MCF 10A (cell line): ENCODE measurements at regions of chr2 and their contacts with region 1.

Region 1: DNA sequence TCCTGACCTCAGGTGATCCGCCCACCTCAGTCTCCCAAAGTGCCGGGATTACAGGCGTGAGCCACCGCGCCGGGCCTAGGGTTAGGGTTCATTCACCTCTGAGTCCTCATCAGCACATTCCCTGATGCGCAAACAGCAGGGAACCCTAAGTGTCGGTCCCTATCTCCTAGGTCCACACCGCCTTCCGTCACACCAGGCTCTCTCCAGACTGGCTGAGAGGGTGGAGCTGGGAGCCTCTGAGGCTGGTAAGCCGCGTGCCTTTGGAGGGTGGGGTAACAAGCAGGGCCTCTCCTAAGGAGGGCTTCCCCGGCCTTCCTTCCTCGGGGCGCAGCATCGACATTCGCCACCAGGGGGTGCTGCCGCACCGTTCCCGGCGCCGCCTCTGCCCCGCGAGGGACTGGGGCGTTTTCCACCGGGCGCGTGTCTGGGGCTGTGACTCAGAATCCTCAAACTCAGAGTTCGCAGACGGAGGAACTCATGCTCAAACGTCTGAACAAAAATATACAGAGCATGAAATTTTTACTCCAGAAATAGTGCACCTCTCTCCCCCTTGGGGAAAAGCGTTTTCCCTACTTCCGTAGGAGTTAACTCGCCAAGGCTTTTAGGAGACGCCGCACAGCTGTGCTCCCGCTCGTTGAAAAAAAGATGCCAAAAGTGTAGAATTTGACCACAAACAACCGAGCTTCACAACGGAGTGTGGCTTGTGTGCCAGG is 63.9 kb upstream of the ASAP2 start:
- DNase-seq: peak; percentile 84
- H3K4me3 Mint-ChIP-seq: peak overlapping the region; percentile 44
- H3K27ac Mint-ChIP-seq: peak overlapping the region; percentile 23
- H3K4me1 Mint-ChIP-seq: peaks cover 20% of the 10 kb centered on the region
- H3K27me3 Mint-ChIP-seq: no peaks in the 10 kb centered on the region
- CTCF ChIP-seq: peak; percentile 96

Region 2: GRCh38 chr2:7905756-7906155 is 1237.0 kb before region 1 on chr2:
- CTCF ChIA-PET with region 1: no interaction called
- POLR2A ChIA-PET with region 1: no interaction called
- intact Hi-C with region 1: no loop called
- DNase-seq: no peak
- H3K4me3 Mint-ChIP-seq: no peak overlapping the region
- H3K27ac Mint-ChIP-seq: no peak overlapping the region
- H3K4me1 Mint-ChIP-seq: no peaks in the 10 kb centered on the region
- H3K27me3 Mint-ChIP-seq: no peaks in the 10 kb centered on the region
- CTCF ChIP-seq: no peak

Region 3: GRCh38 chr2:8424997-8425900 is 717.5 kb before region 1 on chr2:
- CTCF ChIA-PET with region 1: no interaction called
- POLR2A ChIA-PET with region 1: no interaction called
- intact Hi-C with region 1: no loop called
- DNase-seq: no peak
- H3K4me3 Mint-ChIP-seq: no peak overlapping the region
- H3K27ac Mint-ChIP-seq: no peak overlapping the region
- H3K4me1 Mint-ChIP-seq: no peaks in the 10 kb centered on the region
- H3K27me3 Mint-ChIP-seq: no peaks in the 10 kb centered on the region
- CTCF ChIP-seq: no peak

Region 4: GRCh38 chr2:8872821-8873432 is 269.8 kb before region 1 on chr2:
- CTCF ChIA-PET with region 1: interaction called, 137 read pairs
- POLR2A ChIA-PET with region 1: interaction called, 7 read pairs
- intact Hi-C with region 1: loop called (anchors 1 kb)
- DNase-seq: peak; percentile 61
- H3K4me3 Mint-ChIP-seq: no peak overlapping the region
- H3K27ac Mint-ChIP-seq: no peak overlapping the region
- H3K4me1 Mint-ChIP-seq: no peaks in the 10 kb centered on the region
- H3K27me3 Mint-ChIP-seq: no peaks in the 10 kb centered on the region
- CTCF ChIP-seq: peak; percentile 51

Region 5: GRCh38 chr2:9003616-9004337 is 138.9 kb before region 1 on chr2 and contains the start of gene MBOAT2:
- CTCF ChIA-PET with region 1: no interaction called
- POLR2A ChIA-PET with region 1: interaction called, 4 read pairs
- intact Hi-C with region 1: loop called (anchors 1 kb)
- DNase-seq: peak; percentile 84
- H3K4me3 Mint-ChIP-seq: peak within 1 kb of the TSS; percentile 83
- H3K27ac Mint-ChIP-seq: peak within 1 kb of the TSS; percentile 78
- H3K4me1 Mint-ChIP-seq: peaks cover 35% of the 10 kb centered on the region
- H3K27me3 Mint-ChIP-seq: no peaks in the 10 kb centered on the region
- CTCF ChIP-seq: no peak
- total RNA-seq, gene MBOAT2: 30.1 and 34.7 TPM in 2 replicates

Region 6: GRCh38 chr2:9287400-9288043 is 144.8 kb after region 1 on chr2:
- CTCF ChIA-PET with region 1: interaction called, 4 read pairs
- POLR2A ChIA-PET with region 1: interaction called, 5 read pairs
- intact Hi-C with region 1: loop called (anchors 2 kb)
- DNase-seq: peak; percentile 97
- H3K4me3 Mint-ChIP-seq: peak overlapping the region; percentile 50
- H3K27ac Mint-ChIP-seq: peak overlapping the region; percentile 84
- H3K4me1 Mint-ChIP-seq: peaks cover 58% of the 10 kb centered on the region
- H3K27me3 Mint-ChIP-seq: no peaks in the 10 kb centered on the region
- CTCF ChIP-seq: no peak

Region 7: DNA sequence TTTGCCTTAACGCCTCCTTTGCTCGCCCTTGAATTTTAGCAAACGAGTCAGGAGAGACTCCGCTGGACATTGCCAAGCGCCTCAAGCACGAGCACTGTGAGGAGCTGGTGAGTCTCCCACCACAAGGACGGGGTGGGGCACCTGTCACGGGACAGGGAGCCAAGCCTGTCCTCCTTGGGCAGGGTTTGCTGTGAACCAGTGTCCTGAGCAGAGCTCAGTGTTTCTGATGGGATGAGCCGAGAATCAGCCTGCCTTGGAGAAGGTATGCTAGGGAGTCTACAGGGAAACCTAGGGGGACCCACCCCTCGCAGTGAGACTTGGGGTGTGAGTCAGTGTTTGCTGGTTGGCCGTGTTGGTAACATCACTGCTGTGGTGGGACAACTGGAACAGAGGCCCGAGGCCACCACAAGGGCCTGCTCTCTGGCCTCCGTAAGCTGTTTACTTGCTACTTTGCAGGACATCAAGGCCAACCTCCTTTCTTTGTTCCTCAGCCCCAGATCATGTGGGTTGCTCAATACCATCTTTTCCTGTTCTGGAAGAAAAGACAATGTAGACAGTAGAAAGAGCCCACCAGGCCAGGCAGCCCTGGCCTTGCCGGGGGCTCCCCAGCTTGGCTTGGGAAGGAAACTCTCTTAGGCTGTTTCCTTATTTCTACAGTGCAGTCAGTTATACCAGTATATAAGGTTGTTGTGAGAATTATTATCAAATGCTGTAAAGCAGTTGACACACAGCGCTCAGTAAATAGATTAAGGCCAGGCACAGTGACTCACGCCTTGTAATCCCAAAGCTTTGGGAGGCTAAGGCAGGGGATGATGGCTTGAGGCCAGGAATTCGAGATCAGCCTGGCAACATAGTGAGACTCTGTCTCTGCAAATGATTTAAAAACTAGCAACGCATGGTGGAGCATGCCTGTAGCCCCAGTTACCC is 238.3 kb after region 1 on chr2:
- CTCF ChIA-PET with region 1: interaction called, 3 read pairs
- POLR2A ChIA-PET with region 1: interaction called, 4 read pairs
- intact Hi-C with region 1: loop called (anchors 2 kb)
- DNase-seq: peak; percentile 94
- H3K4me3 Mint-ChIP-seq: peak overlapping the region; percentile 11
- H3K27ac Mint-ChIP-seq: peak overlapping the region; percentile 84
- H3K4me1 Mint-ChIP-seq: peaks cover 16% of the 10 kb centered on the region
- H3K27me3 Mint-ChIP-seq: no peaks in the 10 kb centered on the region
- CTCF ChIP-seq: no peak

Region 8: DNA sequence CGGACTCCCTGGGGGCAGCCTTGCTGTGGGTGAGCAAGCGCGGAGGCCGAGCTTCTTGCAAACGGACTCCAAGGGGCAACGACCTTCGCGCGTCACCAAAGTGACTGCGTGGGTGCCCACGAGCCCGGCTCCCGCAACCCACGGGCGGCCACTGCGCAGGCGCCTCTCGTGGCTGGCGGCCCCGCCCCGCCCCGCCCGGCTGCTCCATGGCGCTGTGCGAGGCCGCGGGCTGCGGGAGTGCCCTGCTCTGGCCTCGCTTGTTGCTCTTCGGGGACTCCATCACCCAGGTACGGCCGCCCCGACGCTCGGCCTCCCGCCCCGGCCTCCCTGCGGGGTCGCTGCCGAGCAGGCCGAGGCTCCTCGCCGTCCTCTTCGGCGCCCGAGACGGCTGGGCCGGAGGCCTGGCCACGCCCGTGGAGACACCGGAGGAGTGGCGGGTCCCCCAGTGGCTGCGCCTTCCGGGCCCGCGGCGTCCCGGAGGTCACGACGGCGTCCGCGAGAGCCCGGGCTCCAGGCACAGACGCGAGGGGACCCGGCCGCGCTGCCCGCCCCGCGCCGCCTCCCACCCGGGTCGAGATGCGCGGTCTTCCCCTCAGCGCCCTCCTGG is 331.8 kb after region 1 on chr2 and contains the start of gene IAH1:
- CTCF ChIA-PET with region 1: interaction called, 3 read pairs
- POLR2A ChIA-PET with region 1: interaction called, 3 read pairs
- intact Hi-C with region 1: loop called (anchors 2 kb)
- DNase-seq: peak; percentile 48
- H3K4me3 Mint-ChIP-seq: peak within 1 kb of the TSS; percentile 74
- H3K27ac Mint-ChIP-seq: peak within 1 kb of the TSS; percentile 46
- H3K4me1 Mint-ChIP-seq: peaks cover 11% of the 10 kb centered on the region
- H3K27me3 Mint-ChIP-seq: no peaks in the 10 kb centered on the region
- CTCF ChIP-seq: no peak
- total RNA-seq, gene IAH1: 74.7 and 82.3 TPM in 2 replicates